ENCODE measurements at regions of chr1 and their contacts with region 1.

Region 1: GRCh38 chr1:8560611-8561544 is 243.0 kb downstream of the SLC45A1 start:
- DNase-seq: peak; percentile 27
- H3K4me3 ChIP-seq: no peak overlapping the region
- H3K27ac ChIP-seq: no peak overlapping the region
- H3K4me1 ChIP-seq: no peaks in the 10 kb centered on the region
- H3K27me3 ChIP-seq: no peaks in the 10 kb centered on the region
- CTCF ChIP-seq: peak; percentile 88 to 96

Region 2: DNA sequence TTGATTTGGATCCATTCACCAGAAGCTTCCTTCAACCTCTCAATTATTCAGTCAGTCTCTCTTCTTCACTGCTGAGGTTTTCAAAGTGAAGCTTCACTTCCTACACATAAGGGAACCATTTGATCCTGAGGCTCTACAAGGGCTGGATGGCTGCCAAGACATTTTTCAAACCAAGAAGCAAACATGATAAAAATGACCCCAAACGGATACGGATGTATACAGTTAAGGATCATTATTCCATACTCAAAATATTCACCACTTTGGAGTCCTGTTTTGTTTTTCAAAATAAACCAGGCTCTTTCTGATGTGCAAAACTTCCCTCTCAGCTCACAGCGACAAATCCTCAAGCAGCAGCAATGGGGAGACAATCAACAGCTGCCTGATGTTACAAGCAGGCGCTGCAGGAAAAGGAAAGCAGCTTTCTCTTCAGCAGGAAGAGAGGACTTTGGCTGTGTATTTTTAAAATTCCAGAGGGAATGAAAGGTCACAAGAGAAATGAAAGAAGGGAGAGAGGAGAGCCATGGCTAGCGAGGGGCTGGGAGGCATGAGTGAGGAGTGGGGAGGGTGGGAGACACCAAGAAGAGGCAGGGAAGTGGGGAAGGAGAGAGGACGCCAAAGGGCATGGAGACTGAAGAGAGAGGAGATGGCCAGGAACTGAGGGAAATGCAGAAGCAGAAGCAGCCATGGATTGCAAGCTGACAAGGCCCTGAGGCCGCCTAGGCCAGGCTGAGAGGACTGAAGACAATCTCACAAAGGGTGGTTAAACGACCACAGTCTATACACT is 97.5 kb before region 1 on chr1:
- CTCF ChIA-PET with region 1: no interaction called
- dilution Hi-C with region 1: no loop called
- in situ Hi-C with region 1: no loop called
- intact Hi-C with region 1: no loop called
- DNase-seq: no peak
- H3K4me3 ChIP-seq: no peak overlapping the region
- H3K27ac ChIP-seq: no peak overlapping the region
- H3K4me1 ChIP-seq: peaks cover 5% of the 10 kb centered on the region
- H3K27me3 ChIP-seq: no peaks in the 10 kb centered on the region
- CTCF ChIP-seq: no peak

Region 3: DNA sequence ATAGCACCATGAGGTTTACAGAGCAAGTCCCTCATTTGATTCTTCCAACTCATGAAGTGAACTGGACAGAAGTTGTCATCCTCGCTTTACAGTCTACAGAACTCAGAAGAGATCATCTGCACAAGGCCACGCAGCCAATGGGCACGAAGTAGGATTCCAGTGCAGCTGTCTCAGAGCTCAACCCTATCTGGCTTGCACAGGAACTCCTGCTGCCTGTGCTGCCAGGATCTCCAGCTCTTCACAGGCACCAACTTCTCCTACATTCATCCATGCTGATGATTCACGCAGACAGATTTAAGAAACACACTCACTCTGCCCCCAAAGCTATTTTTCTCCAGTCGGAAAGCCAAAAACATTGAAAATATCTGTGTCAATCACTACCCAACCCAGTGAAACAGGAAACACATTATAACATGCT is 99.5 kb after region 1 on chr1:
- CTCF ChIA-PET with region 1: no interaction called
- dilution Hi-C with region 1: no loop called
- in situ Hi-C with region 1: loop called (anchors 5 to 25 kb)
- intact Hi-C with region 1: no loop called
- DNase-seq: peak; percentile 77
- H3K4me3 ChIP-seq: no peak overlapping the region
- H3K27ac ChIP-seq: peak overlapping the region; percentile 60
- H3K4me1 ChIP-seq: peaks cover 29% of the 10 kb centered on the region
- H3K27me3 ChIP-seq: no peaks in the 10 kb centered on the region
- CTCF ChIP-seq: no peak

Region 4: DNA sequence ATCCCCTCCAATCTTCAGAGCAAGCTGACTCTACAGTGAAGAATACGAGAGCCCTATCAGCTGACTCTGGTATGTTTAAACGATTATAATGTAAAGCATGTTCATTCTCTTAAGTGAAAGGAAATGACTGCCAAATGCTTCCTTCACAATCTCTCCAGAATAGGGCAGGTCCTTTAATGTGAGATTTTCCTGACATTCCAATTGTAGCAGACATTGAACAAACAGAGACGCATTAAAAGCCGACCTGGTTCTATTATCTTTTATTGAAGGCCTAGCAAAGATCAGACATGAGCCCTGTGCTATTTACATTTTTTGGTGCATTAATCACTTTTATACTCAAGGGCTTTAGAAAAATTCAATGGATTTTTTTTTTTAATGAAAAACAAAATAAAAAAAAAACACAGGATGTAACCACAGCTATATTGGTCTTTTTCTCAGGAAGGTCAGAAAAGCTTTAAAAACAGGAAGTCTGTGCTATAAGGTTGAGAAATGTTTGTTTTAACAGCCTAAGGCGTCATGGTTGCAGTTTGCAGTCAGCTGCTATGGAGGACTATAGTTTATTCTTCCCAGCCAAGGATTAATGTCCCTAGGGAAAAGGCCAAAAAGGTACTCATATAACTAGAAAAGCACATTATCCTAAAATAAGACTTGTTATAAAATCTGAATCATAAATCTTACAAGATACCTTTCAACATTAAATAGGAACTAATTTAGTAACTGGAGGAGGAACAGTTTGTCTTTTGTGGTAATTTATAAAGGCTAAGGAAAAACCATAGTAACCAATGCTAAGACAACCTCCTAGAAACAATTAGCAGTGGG is 151.7 kb after region 1 on chr1:
- CTCF ChIA-PET with region 1: no interaction called
- dilution Hi-C with region 1: no loop called
- in situ Hi-C with region 1: loop called in 1 of 2 experiments (anchors 10 kb)
- intact Hi-C with region 1: no loop called
- DNase-seq: peak; percentile 50
- H3K4me3 ChIP-seq: no peak overlapping the region
- H3K27ac ChIP-seq: peak overlapping the region; percentile 64
- H3K4me1 ChIP-seq: peaks cover 4% of the 10 kb centered on the region
- H3K27me3 ChIP-seq: no peaks in the 10 kb centered on the region
- CTCF ChIP-seq: no peak

Region 5: DNA sequence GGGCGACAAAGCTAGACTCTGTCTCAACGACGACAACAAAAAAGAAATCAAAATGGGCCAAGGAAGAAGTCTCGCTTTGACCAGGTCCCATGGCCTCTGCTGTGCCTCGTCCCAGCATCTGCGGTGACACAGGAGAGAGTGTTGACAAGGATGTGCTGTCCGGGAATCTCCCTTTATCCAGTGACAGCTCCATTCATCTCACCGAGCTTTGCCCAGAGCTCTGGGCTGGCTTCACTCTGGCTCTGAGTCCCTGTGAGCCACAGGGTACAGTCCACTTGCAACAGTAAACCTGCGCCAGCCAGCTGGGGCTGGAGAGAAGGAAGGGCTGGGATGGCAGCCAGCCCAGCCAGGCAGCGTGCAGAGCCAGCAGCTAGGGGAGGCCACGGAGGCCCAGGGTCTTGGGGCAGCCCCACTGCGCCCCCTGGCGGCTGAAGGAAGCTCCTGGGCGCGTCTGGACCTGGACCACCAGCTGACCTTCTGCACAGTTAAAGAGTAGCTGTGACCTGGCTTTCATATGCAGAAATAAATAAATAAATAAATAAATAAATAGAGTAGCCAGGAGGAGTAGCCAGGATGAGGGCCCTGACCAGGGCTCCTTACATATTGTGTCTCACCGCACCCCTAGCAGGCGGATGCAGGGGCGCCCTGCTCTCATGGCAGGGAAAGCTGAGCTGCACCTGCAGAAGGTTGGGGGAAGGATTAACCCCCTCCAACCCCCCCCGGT is 287.9 kb after region 1 on chr1:
- CTCF ChIA-PET with region 1: no interaction called
- dilution Hi-C with region 1: no loop called
- in situ Hi-C with region 1: loop called (anchors 10 kb)
- intact Hi-C with region 1: loop called (anchors 1 kb)
- DNase-seq: peak; percentile 86
- H3K4me3 ChIP-seq: no peak overlapping the region
- H3K27ac ChIP-seq: no peak overlapping the region
- H3K4me1 ChIP-seq: peaks cover 4% of the 10 kb centered on the region
- H3K27me3 ChIP-seq: no peaks in the 10 kb centered on the region
- CTCF ChIP-seq: peak; percentile 77 to 97